ENCODE measurements at regions of chr15 and their contacts with region 1.

Region 1: GRCh38 chr15:74438721-74439316 is 5.1 kb upstream of the SEMA7A start:
- DNase-seq: no peak
- H3K4me3 ChIP-seq: no peak overlapping the region
- H3K27me3 ChIP-seq: no peaks in the 10 kb centered on the region
- CTCF ChIP-seq: peak; percentile 94

Region 2: GRCh38 chr15:73956739-73957051 is 482.1 kb before region 1 on chr15:
- CTCF ChIA-PET with region 1: no interaction called
- POLR2A ChIA-PET with region 1: no interaction called
- DNase-seq: peak; percentile 85
- H3K4me3 ChIP-seq: no peak overlapping the region
- H3K27me3 ChIP-seq: no peaks in the 10 kb centered on the region
- CTCF ChIP-seq: no peak

Region 3: DNA sequence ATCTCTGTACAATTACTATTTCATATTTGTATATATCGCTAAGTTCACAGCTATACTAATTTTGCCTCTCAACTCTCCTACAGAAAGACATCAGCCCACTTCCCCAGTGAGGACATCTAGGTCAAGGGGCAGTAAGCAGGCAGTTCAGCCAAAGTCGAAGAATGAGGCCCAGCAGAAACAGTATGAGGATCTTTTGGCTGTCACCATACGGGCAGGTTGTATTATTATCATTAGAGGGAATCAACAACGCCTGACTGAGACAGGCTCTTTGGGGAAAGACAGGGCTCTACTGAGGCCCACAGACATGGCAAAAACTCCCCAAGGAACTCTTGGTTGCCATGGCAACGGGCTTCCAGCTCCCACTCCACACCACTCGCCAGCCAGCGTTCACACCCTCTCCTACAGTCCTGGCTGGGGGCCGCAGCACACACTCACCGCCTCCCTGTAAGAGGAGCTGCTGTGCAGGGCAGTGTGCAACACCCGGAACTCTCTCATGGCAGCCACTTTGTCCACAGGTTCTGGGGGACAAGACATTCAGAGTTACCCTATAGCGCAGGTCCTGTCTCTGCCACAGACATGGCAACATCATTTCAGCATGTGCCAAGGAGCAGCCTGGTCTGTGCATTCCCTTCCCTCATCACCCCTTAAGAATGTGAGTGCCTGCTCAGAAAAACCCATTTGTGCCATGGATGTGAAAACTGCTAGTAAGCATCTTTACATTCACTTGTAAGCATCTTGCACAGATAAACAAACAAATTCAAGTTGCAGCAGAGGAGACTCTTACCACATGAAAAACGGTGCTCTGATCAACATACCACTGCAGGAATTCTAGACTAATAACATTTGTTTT is 13.3 kb after region 1 on chr15:
- CTCF ChIA-PET with region 1: interaction called, 13 read pairs
- POLR2A ChIA-PET with region 1: no interaction called
- DNase-seq: no peak
- H3K4me3 ChIP-seq: no peak overlapping the region
- H3K27me3 ChIP-seq: no peaks in the 10 kb centered on the region
- CTCF ChIP-seq: no peak

Measured in BJ (cell line).